Dendritic cell treated with granulocyte-macrophage colony-stimulating factor and Interleukin-4, amounts not matched to agents 40 ng/mL and 50 ng/mL, for 4 days (primary cell): ENCODE measurements at regions of chr1 and their contacts with region 1.

Region 1: DNA sequence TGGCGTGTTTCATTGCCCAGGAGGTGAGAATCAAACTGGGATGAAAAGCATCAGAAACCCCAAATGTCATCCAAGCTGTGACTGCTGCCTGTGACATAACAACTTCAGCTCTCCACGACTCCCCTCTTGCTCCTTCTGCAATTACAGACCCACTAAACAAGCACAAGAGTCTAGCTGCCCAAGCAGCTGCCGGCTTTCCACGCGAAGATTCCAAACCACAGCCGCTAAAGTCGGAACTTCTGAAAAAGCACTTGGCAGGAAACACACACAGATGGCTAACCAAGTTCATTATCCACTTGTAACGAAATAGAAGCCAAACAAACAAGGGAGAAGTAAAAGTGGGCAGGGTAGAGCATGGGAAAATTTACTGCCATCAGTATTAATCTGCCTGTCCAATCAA is 198.1 kb downstream of the SLC35F3 start:
- H3K4me3 Mint-ChIP-seq: no peak overlapping the region
- H3K27ac Mint-ChIP-seq: no peak overlapping the region
- H3K4me1 Mint-ChIP-seq: no peaks in the 10 kb centered on the region
- H3K27me3 Mint-ChIP-seq: peaks cover 10% of the 10 kb centered on the region

Region 2: DNA sequence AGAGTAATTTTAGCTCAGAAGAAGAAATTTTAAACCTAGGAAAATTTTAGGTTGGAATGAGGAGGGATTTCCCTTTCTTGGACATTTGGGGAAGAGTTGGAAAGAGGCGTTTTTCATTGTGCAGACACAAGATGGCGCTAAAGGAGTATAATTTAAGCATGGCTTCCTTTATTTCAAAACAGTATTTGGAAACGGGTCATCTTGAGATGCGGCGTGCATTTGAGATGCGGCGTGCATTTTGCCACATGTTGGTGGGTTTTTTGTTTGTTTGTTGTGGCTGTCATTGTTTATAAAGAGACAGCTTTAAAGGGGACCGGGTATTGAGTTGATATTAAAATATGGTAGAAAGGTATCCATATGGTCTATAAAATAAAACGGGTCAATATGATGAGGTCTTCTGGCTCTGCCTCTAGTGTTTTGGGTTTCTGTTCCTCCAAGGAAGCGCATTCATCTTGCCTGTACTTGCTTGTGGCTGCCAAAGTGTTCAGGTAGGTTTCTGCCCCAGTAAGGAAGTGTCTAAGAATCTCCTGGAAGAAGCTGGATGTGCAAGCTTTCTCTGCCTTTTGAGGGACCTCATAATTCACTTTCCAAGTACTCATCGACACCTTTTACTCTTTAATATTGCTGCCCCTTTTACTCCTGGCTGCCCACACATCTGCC is 12.2 kb after region 1 on chr1:
- intact Hi-C with region 1: loop called (anchors 1 kb)
- H3K4me3 Mint-ChIP-seq: no peak overlapping the region
- H3K27ac Mint-ChIP-seq: no peak overlapping the region
- H3K4me1 Mint-ChIP-seq: peaks cover 9% of the 10 kb centered on the region
- H3K27me3 Mint-ChIP-seq: peaks cover 14% of the 10 kb centered on the region